ENCODE measurements at regions of chrX and their contacts with region 1.

Region 1: DNA sequence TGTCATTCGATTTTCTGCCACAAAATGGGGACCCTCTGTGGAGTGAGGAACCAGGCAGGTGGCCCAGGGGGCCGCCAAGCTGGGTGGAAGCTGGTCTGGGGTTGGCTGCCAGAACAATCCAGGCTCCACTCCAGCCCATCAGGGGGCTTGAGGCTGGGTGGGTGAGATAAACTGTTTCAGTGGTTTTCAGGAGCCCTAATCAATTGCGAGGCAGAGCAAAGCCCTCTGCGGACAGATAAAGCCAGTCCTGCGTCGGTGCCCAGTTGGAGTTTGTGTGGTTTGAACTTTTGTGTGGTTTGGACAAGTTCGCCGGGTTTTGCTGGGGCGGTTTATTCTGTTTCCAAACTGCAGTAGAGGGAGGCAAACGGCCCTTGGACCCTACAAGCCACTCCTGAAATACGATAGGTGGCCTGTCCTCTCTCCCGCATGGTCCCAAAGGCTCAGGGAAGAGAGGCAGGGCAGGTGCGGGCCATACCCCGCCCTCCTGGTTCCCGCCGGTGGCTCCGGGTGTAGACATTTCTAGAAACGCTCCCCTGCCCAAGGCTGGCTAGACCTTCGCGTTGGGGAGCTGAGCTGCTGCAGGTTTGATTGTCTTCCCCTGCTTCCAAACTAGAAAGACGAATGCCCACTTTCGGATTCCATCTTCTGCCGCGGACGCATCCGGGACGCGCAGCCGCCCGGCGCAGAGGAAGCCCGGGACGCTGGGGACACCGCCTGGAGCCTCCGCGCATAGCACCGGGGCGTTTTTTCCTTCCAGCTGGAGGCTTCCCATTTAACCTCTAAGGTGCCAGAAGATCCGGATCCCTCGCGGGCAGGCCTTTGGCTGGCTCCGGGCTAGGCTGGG is 169.0 kb upstream of the BCOR start:
- DNase-seq: peak; percentile 56
- ATAC-seq: peak; percentile 95
- H3K4me3 ChIP-seq: peak overlapping the region; percentile 51
- H3K27ac ChIP-seq: peak overlapping the region; percentile 57; the same call in 1 of the 2 replicates
- H3K4me1 ChIP-seq: peaks cover 10% of the 10 kb centered on the region
- H3K27me3 ChIP-seq: no peaks in the 10 kb centered on the region; the same call in 1 of the 2 replicates
- CTCF ChIP-seq: peak; percentile 79
- POLR2A ChIP-seq: peak; percentile 26; the same call in 1 of the 2 replicates
- RAD21 ChIP-seq: peak; percentile 89

Region 2: GRCh38 chrX:38754102-38754790 is 1512.5 kb before region 1 on chrX:
- CTCF ChIA-PET with region 1: no interaction called
- POLR2A ChIA-PET with region 1: no interaction called
- dilution Hi-C with region 1: no loop called
- in situ Hi-C with region 1: no loop called
- intact Hi-C with region 1: loop called (anchors 10 kb)
- DNase-seq: peak; percentile 58
- ATAC-seq: peak; percentile 82
- H3K4me3 ChIP-seq: no peak overlapping the region
- H3K27ac ChIP-seq: no peak overlapping the region
- H3K4me1 ChIP-seq: no peaks in the 10 kb centered on the region
- H3K27me3 ChIP-seq: peaks cover 32% of the 10 kb centered on the region
- CTCF ChIP-seq: peak; percentile 64
- POLR2A ChIP-seq: no peak
- RAD21 ChIP-seq: peak; percentile 79

Region 3: DNA sequence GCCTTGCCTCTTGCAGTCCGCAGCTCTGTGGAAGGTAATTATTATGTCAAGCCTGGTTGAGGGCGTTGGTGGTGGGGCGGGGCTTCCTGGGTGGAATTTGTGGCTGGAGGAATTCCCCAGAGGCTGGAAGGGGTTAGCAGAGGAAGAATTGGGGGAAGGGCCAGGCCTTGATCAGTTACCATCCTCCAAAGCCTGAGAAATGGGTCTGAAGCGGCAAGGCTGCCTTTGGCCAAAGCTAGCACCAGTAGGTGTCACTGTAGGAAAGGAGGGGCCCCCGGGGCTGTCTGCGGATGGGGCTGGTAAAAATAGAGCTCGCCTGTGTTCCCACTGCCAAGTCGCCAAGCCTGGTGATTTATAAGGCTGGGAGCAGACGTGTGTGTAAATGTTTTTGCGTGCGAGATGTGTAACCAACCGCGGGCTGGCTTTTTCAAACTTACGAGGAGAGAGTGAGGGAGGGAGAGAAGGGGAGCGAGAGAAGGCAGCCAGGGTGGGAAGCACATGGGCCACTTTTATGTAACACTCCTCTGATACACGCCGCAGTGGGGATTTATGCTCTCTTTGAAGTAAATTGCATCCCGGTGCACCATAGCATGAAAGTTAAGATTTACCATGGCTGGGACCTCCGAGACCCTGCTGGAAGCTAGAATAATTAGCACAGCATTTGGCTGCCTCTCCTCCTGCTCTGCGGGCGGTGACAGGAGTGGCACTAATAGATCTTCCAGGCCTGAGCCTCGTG is 535.9 kb before region 1 on chrX:
- CTCF ChIA-PET with region 1: no interaction called
- POLR2A ChIA-PET with region 1: interaction called, 3 read pairs
- dilution Hi-C with region 1: no loop called
- in situ Hi-C with region 1: loop called (anchors 10 kb)
- intact Hi-C with region 1: loop called (anchors 2 kb)
- DNase-seq: peak; percentile 88
- ATAC-seq: peak; percentile 81
- H3K4me3 ChIP-seq: no peak overlapping the region
- H3K27ac ChIP-seq: no peak overlapping the region
- H3K4me1 ChIP-seq: peaks cover 10% of the 10 kb centered on the region
- H3K27me3 ChIP-seq: peaks cover 21% of the 10 kb centered on the region
- CTCF ChIP-seq: peak; percentile 77
- POLR2A ChIP-seq: peak; percentile 43; the same call in 1 of the 2 replicates
- RAD21 ChIP-seq: peak; percentile 85

Region 4: GRCh38 chrX:39896951-39897740 is 369.6 kb before region 1 on chrX:
- CTCF ChIA-PET with region 1: no interaction called
- POLR2A ChIA-PET with region 1: no interaction called
- dilution Hi-C with region 1: no loop called
- in situ Hi-C with region 1: no loop called
- intact Hi-C with region 1: loop called (anchors 2 kb)
- DNase-seq: peak; percentile 62
- ATAC-seq: peak; percentile 83
- H3K4me3 ChIP-seq: no peak overlapping the region
- H3K27ac ChIP-seq: peak overlapping the region; percentile 39
- H3K4me1 ChIP-seq: peaks cover 10% of the 10 kb centered on the region
- H3K27me3 ChIP-seq: no peaks in the 10 kb centered on the region; the same call in 1 of the 2 replicates
- CTCF ChIP-seq: 0 out of 2 replicates have a peak, but pooled peaks have one; percentile 1
- POLR2A ChIP-seq: no peak
- RAD21 ChIP-seq: no peak

Region 5: GRCh38 chrX:40097497-40098263 is 169.0 kb before region 1 on chrX and contains the start of gene BCOR:
- CTCF ChIA-PET with region 1: no interaction called
- POLR2A ChIA-PET with region 1: no interaction called
- dilution Hi-C with region 1: no loop called
- in situ Hi-C with region 1: no loop called
- intact Hi-C with region 1: loop called (anchors 1 kb)
- DNase-seq: peak; percentile 58
- ATAC-seq: peak; percentile 36
- H3K4me3 ChIP-seq: peak within 1 kb of the TSS; percentile 86
- H3K27ac ChIP-seq: peak within 1 kb of the TSS; percentile 66
- H3K4me1 ChIP-seq: peaks cover 3% of the 10 kb centered on the region
- H3K27me3 ChIP-seq: no peaks in the 10 kb centered on the region; the same call in 1 of the 2 replicates
- CTCF ChIP-seq: no peak
- POLR2A ChIP-seq: peak; percentile 86
- RAD21 ChIP-seq: no peak
- total RNA-seq, gene BCOR: 7.5 and 8.9 TPM in 2 replicates

Measured in IMR-90 (cell line).